ENCODE measurements at regions of chr18 and their contacts with region 1.

Region 1: GRCh38 chr18:12574494-12575185 is 83.3 kb downstream of the SPIRE1 start:
- DNase-seq: no peak
- H3K4me3 ChIP-seq: no peak overlapping the region
- H3K27ac ChIP-seq: no peak overlapping the region
- H3K4me1 ChIP-seq: no peaks in the 10 kb centered on the region
- H3K27me3 ChIP-seq: no peaks in the 10 kb centered on the region
- CTCF ChIP-seq: no peak
- EP300 ChIP-seq: no peak
- POLR2A ChIP-seq: no peak

Region 2: GRCh38 chr18:12015416-12016062 is 559.1 kb before region 1 on chr18:
- in situ Hi-C with region 1: no loop called
- intact Hi-C with region 1: loop called (anchors 10 kb)
- DNase-seq: peak; percentile 85
- H3K4me3 ChIP-seq: no peak overlapping the region
- H3K27ac ChIP-seq: peak overlapping the region; percentile 86 to 91 (median 90)
- H3K4me1 ChIP-seq: peaks cover 32 to 45% (median 35%) of the 10 kb centered on the region in 4 donors
- H3K27me3 ChIP-seq: no peaks in the 10 kb centered on the region
- CTCF ChIP-seq: no peak
- EP300 ChIP-seq: no peak
- POLR2A ChIP-seq: no peak

Measured in transverse colon (tissue), 4 donors.